ENCODE measurements at regions of chr18 and their contacts with region 1.

Region 1: GRCh38 chr18:40413160-40413559 is 1541.9 kb upstream of the PIK3C3 start:
- DNase-seq: peak; percentile 19
- H3K4me3 ChIP-seq: no peak overlapping the region
- H3K27ac ChIP-seq: no peak overlapping the region
- H3K4me1 ChIP-seq: no peaks in the 10 kb centered on the region
- H3K27me3 ChIP-seq: no peaks in the 10 kb centered on the region
- CTCF ChIP-seq: peak in 4 of 5 experiments; percentile 32 to 54 (median 46)
- EP300 ChIP-seq: no peak
- POLR2A ChIP-seq: no peak

Region 2: GRCh38 chr18:40159141-40160017 is 253.8 kb before region 1 on chr18:
- in situ Hi-C with region 1: no loop called
- intact Hi-C with region 1: no loop called
- DNase-seq: no peak
- H3K4me3 ChIP-seq: no peak overlapping the region
- H3K27ac ChIP-seq: no peak overlapping the region
- H3K4me1 ChIP-seq: no peaks in the 10 kb centered on the region
- H3K27me3 ChIP-seq: no peaks in the 10 kb centered on the region
- CTCF ChIP-seq: peak in 4 of 5 experiments; percentile 22 to 39 (median 34)
- EP300 ChIP-seq: no peak
- POLR2A ChIP-seq: no peak

Region 3: GRCh38 chr18:40313030-40313642 is 100.0 kb before region 1 on chr18:
- in situ Hi-C with region 1: loop called in 1 of 4 experiments (anchors 25 kb)
- intact Hi-C with region 1: no loop called
- DNase-seq: no peak
- H3K4me3 ChIP-seq: no peak overlapping the region
- H3K27ac ChIP-seq: no peak overlapping the region
- H3K4me1 ChIP-seq: no peaks in the 10 kb centered on the region
- H3K27me3 ChIP-seq: no peaks in the 10 kb centered on the region
- CTCF ChIP-seq: no peak
- EP300 ChIP-seq: no peak
- POLR2A ChIP-seq: no peak